ENCODE measurements at regions of chr2 and their contacts with region 1.

Region 1: GRCh38 chr2:176653479-176654443 is 384.5 kb downstream of the MTX2 start:
- DNase-seq: peak; percentile 60
- ATAC-seq: peak; percentile 69
- H3K4me3 Mint-ChIP-seq: no peak overlapping the region
- H3K27ac Mint-ChIP-seq: no peak overlapping the region
- H3K4me1 Mint-ChIP-seq: peaks cover 8% of the 10 kb centered on the region
- H3K27me3 Mint-ChIP-seq: peaks cover 41% of the 10 kb centered on the region

Region 2: GRCh38 chr2:176638167-176639015 is 15.4 kb before region 1 on chr2:
- CTCF ChIA-PET with region 1: interaction called, 28 read pairs
- POLR2A ChIA-PET with region 1: no interaction called
- intact Hi-C with region 1: no loop called
- DNase-seq: peak; percentile 80
- ATAC-seq: peak; percentile 86
- H3K4me3 Mint-ChIP-seq: peak overlapping the region; percentile 55
- H3K27ac Mint-ChIP-seq: no peak overlapping the region
- H3K4me1 Mint-ChIP-seq: peaks cover 5% of the 10 kb centered on the region
- H3K27me3 Mint-ChIP-seq: peaks cover 44% of the 10 kb centered on the region

Region 3: DNA sequence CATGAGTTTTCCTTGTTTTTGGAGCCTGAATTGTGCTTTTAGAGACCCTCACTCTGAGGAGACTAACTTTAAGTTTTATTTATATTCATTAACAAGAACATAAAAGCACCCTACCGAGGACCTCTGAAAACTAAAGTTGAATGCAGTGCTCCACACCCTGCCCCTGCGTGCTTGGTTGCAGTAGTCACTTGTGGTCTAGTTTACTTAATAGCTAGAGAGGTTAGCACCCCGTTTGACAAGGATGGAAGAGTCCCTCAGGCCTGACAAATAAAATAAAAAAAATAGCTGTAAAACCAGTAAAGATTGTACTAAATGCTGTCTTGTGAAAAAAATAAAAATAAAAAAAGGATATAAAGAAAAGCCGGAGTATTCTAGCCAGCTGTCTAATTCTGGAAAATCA is 10.7 kb after region 1 on chr2:
- CTCF ChIA-PET with region 1: interaction called, 57 read pairs
- POLR2A ChIA-PET with region 1: no interaction called
- intact Hi-C with region 1: no loop called
- DNase-seq: no peak
- ATAC-seq: no peak
- H3K4me3 Mint-ChIP-seq: no peak overlapping the region
- H3K27ac Mint-ChIP-seq: no peak overlapping the region
- H3K4me1 Mint-ChIP-seq: no peaks in the 10 kb centered on the region
- H3K27me3 Mint-ChIP-seq: peaks cover 34% of the 10 kb centered on the region

Region 4: GRCh38 chr2:176814306-176815052 is 160.7 kb after region 1 on chr2:
- CTCF ChIA-PET with region 1: interaction called, 7 read pairs
- POLR2A ChIA-PET with region 1: no interaction called
- intact Hi-C with region 1: loop called (anchors 5 kb)
- DNase-seq: peak; percentile 9
- ATAC-seq: peak; percentile 43
- H3K4me3 Mint-ChIP-seq: no peak overlapping the region
- H3K27ac Mint-ChIP-seq: no peak overlapping the region
- H3K4me1 Mint-ChIP-seq: peaks cover 14% of the 10 kb centered on the region
- H3K27me3 Mint-ChIP-seq: no peaks in the 10 kb centered on the region